ENCODE measurements at regions of chr7 and their contacts with region 1.

Region 1: DNA sequence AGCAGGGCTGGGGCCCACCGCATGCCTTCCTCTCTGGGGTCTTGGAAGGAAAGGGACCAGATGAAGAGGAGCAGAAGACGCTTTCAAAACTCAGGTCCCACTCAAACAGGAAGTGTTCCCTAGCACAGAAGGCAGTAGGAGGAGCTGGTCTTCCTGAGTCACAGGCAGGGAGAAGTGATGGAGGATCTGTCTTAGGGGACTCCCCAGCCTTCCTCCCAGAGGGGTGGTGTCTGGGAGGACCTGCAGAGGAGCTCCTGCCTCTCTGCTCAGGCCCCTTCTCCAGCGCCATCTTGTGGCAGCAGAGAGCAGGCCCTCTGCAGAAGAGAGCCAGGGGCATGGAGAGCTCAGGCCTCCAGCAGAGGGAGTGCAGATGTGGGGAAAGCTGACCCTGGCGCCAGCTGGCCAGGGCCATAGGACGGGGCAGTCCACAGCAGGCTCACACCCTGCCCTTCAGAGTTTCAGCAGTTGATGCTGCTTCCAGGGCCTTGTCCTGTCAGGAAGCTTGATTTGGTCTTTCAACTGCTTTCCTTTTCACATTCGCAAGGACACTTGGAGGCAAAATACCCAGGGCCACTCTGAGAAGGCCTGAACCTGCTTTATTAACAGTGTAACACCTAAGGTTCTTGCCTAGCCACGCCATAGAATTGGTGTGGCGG is 62.2 kb upstream of the TARP start:
- DNase-seq: peak in 34 of 35 experiments; percentile 59 to 87 (median 74)
- ATAC-seq: peak; percentile 79 to 91 (median 84)
- H3K4me3 ChIP-seq: peak overlapping the region in 1 of 2 donors; percentile 38
- H3K4me3 Mint-ChIP-seq: peak overlapping the region; percentile 75 to 83 (median 80)
- H3K27ac ChIP-seq: peak overlapping the region; percentile 57
- H3K27ac Mint-ChIP-seq: peak overlapping the region; percentile 87 to 95
- H3K4me1 ChIP-seq: peaks cover 15 to 25% of the 10 kb centered on the region in 2 experiments
- H3K4me1 Mint-ChIP-seq: peaks cover 42 to 57% (median 50%) of the 10 kb centered on the region in 3 donors
- H3K27me3 ChIP-seq: no peaks in the 10 kb centered on the region
- H3K27me3 Mint-ChIP-seq: no peaks in the 10 kb centered on the region

Region 2: GRCh38 chr7:38222481-38223096 is 113.0 kb before region 1 on chr7:
- CTCF ChIA-PET with region 1: interaction called, 14 to 173 read pairs
- POLR2A ChIA-PET with region 1: no interaction called
- DNase-seq: peak in 10 of 35 experiments; percentile 10 to 85 (median 22)
- ATAC-seq: peak; percentile 64 to 78 (median 74)
- H3K4me3 ChIP-seq: no peak overlapping the region
- H3K4me3 Mint-ChIP-seq: no peak overlapping the region
- H3K27ac ChIP-seq: peak overlapping the region; percentile 68
- H3K27ac Mint-ChIP-seq: peak overlapping the region; percentile 84 to 90
- H3K4me1 ChIP-seq: peaks cover 0 to 42% of the 10 kb centered on the region in 2 experiments
- H3K4me1 Mint-ChIP-seq: peaks cover 10 to 61% (median 54%) of the 10 kb centered on the region in 3 donors
- H3K27me3 ChIP-seq: no peaks in the 10 kb centered on the region
- H3K27me3 Mint-ChIP-seq: no peaks in the 10 kb centered on the region

Region 3: DNA sequence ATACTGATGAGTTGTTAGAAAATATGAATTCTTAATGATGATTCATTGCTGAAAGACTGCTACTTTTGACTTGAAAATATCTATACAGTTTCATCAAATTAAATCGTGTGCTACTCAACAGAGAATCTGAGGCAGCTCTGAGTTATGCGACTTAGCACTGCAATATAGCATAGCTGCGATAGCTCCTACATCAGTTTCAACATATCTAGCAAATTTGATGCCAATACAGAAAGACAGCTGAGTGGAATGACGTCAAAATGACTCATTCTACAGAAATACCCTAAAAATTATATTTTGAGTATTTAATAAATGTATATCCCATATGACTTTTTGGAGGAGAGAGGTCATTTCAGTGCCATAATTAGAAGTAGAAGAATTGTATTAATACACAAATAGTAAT is 61.1 kb before region 1 on chr7:
- CTCF ChIA-PET with region 1: interaction called, 4 to 18 read pairs
- POLR2A ChIA-PET with region 1: no interaction called
- DNase-seq: peak in 1 of 35 experiments; percentile 11
- ATAC-seq: no peak
- H3K4me3 ChIP-seq: peak overlapping the region in 1 of 2 donors; percentile 38
- H3K4me3 Mint-ChIP-seq: peak overlapping the region; percentile 19 to 72 (median 53)
- H3K27ac ChIP-seq: no peak overlapping the region
- H3K27ac Mint-ChIP-seq: no peak overlapping the region
- H3K4me1 ChIP-seq: no peaks in the 10 kb centered on the region
- H3K4me1 Mint-ChIP-seq: no peaks in the 10 kb centered on the region
- H3K27me3 ChIP-seq: no peaks in the 10 kb centered on the region
- H3K27me3 Mint-ChIP-seq: no peaks in the 10 kb centered on the region

Region 4: GRCh38 chr7:38318803-38319416 is 16.7 kb before region 1 on chr7:
- CTCF ChIA-PET with region 1: interaction called, 8 to 31 read pairs
- POLR2A ChIA-PET with region 1: no interaction called
- DNase-seq: peak in 2 of 35 experiments; percentile 26 to 57
- ATAC-seq: peak in 2 of 4 experiments; percentile 49 to 59
- H3K4me3 ChIP-seq: peak overlapping the region in 1 of 2 donors; percentile 47
- H3K4me3 Mint-ChIP-seq: peak overlapping the region; percentile 62 to 77 (median 72)
- H3K27ac ChIP-seq: peak overlapping the region; percentile 44
- H3K27ac Mint-ChIP-seq: peak overlapping the region; percentile 89 to 90
- H3K4me1 ChIP-seq: peaks cover 17 to 32% of the 10 kb centered on the region in 2 experiments
- H3K4me1 Mint-ChIP-seq: peaks cover 31 to 48% (median 36%) of the 10 kb centered on the region in 3 donors
- H3K27me3 ChIP-seq: no peaks in the 10 kb centered on the region
- H3K27me3 Mint-ChIP-seq: no peaks in the 10 kb centered on the region

Region 5: GRCh38 chr7:38351601-38352000 is 16.0 kb after region 1 on chr7:
- CTCF ChIA-PET with region 1: interaction called, 3 to 20 read pairs
- POLR2A ChIA-PET with region 1: no interaction called
- DNase-seq: no peak
- ATAC-seq: no peak
- H3K4me3 ChIP-seq: peak overlapping the region in 1 of 2 donors; percentile 2
- H3K4me3 Mint-ChIP-seq: peak overlapping the region; percentile 83 to 87 (median 86)
- H3K27ac ChIP-seq: no peak overlapping the region
- H3K27ac Mint-ChIP-seq: peak overlapping the region; percentile 98
- H3K4me1 ChIP-seq: peaks cover 3 to 22% of the 10 kb centered on the region in 2 experiments
- H3K4me1 Mint-ChIP-seq: peaks cover 62 to 71% (median 67%) of the 10 kb centered on the region in 3 donors
- H3K27me3 ChIP-seq: no peaks in the 10 kb centered on the region
- H3K27me3 Mint-ChIP-seq: no peaks in the 10 kb centered on the region

Region 6: GRCh38 chr7:38360776-38361175 is 25.2 kb after region 1 on chr7:
- CTCF ChIA-PET with region 1: interaction called, 12 to 15 read pairs
- POLR2A ChIA-PET with region 1: interaction called, 6 to 12 read pairs
- DNase-seq: no peak
- ATAC-seq: no peak
- H3K4me3 ChIP-seq: peak overlapping the region in 1 of 2 donors; percentile 56
- H3K4me3 Mint-ChIP-seq: peak overlapping the region; percentile 92 to 95 (median 94)
- H3K27ac ChIP-seq: peak overlapping the region; percentile 39
- H3K27ac Mint-ChIP-seq: peak overlapping the region; percentile 96
- H3K4me1 ChIP-seq: peaks cover 11 to 33% of the 10 kb centered on the region in 2 experiments
- H3K4me1 Mint-ChIP-seq: peaks cover 77 to 87% (median 80%) of the 10 kb centered on the region in 3 donors
- H3K27me3 ChIP-seq: no peaks in the 10 kb centered on the region
- H3K27me3 Mint-ChIP-seq: no peaks in the 10 kb centered on the region

Region 7: DNA sequence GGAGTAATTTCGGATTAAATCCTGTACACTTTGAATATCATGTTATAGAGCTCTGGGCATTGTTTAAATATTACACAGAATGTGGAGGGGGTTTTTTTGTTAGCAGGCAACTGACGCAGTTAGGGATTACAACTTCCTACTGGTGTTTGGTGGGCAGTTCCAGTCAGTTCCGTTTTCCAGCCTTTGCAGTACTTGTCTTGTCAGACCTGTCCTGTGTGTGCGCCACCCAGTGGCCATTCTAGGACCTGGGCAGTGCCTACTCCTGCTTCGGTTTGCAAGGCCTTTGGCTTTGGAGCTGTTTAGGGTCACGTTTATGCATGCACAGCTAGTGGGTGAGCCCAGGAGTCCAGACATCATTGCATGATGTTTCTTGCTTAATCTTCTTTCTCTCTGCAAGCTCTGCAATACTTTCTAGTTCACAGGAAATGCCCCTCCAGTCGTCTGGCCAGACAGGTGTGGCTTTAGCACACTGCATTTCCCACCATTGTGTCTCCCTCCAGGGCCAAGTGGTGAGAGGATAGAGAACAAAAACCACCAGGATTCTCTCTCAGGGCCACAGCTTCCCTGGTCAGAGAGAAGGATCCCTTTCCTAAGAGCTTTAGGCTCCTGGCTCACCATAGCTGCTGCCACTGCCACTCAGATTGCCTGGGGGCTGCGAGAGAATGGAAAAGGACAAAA is 34.3 kb after region 1 on chr7:
- CTCF ChIA-PET with region 1: interaction called, 17 to 34 read pairs
- POLR2A ChIA-PET with region 1: interaction called in 1 of 2 experiments, 4 read pairs
- DNase-seq: peak; percentile 42 to 89 (median 73)
- ATAC-seq: peak in 3 of 4 experiments; percentile 55 to 58 (median 58)
- H3K4me3 ChIP-seq: no peak overlapping the region
- H3K4me3 Mint-ChIP-seq: peak overlapping the region; percentile 40 to 58 (median 46)
- H3K27ac ChIP-seq: peak overlapping the region; percentile 59
- H3K27ac Mint-ChIP-seq: peak overlapping the region; percentile 91
- H3K4me1 ChIP-seq: peaks cover 27 to 50% of the 10 kb centered on the region in 2 experiments
- H3K4me1 Mint-ChIP-seq: peaks cover 69 to 75% (median 71%) of the 10 kb centered on the region in 3 donors
- H3K27me3 ChIP-seq: no peaks in the 10 kb centered on the region
- H3K27me3 Mint-ChIP-seq: no peaks in the 10 kb centered on the region

Region 8: DNA sequence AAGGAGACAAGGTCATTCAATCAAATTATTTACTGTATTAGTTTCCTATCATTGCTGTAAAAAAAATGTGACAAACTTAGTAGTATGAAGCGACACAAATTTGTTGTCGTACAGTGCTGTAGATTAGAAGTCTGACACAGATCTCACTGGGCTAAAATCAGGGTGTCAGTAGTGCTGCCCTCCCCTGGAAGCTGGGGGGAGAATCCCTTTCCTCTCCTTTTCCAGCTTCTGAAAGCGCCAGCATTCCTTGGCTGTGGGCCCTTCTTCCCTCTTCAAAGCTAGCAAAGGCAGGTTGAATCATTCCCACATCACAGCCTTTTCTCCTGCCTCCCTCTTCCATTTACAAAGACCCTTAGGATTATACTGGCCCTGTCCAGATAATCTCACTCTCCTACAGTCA is 545.4 kb after region 1 on chr7:
- CTCF ChIA-PET with region 1: no interaction called
- POLR2A ChIA-PET with region 1: no interaction called
- DNase-seq: no peak
- ATAC-seq: no peak
- H3K4me3 ChIP-seq: no peak overlapping the region
- H3K4me3 Mint-ChIP-seq: no peak overlapping the region
- H3K27ac ChIP-seq: no peak overlapping the region
- H3K27ac Mint-ChIP-seq: no peak overlapping the region
- H3K4me1 ChIP-seq: peaks cover 0 to 2% of the 10 kb centered on the region in 2 experiments
- H3K4me1 Mint-ChIP-seq: peaks cover 58 to 81% (median 64%) of the 10 kb centered on the region in 3 donors
- H3K27me3 ChIP-seq: no peaks in the 10 kb centered on the region
- H3K27me3 Mint-ChIP-seq: no peaks in the 10 kb centered on the region

Measured in T-cell (primary cell).